ENCODE measurements at regions of chr2 and their contacts with region 1.

Region 1: DNA sequence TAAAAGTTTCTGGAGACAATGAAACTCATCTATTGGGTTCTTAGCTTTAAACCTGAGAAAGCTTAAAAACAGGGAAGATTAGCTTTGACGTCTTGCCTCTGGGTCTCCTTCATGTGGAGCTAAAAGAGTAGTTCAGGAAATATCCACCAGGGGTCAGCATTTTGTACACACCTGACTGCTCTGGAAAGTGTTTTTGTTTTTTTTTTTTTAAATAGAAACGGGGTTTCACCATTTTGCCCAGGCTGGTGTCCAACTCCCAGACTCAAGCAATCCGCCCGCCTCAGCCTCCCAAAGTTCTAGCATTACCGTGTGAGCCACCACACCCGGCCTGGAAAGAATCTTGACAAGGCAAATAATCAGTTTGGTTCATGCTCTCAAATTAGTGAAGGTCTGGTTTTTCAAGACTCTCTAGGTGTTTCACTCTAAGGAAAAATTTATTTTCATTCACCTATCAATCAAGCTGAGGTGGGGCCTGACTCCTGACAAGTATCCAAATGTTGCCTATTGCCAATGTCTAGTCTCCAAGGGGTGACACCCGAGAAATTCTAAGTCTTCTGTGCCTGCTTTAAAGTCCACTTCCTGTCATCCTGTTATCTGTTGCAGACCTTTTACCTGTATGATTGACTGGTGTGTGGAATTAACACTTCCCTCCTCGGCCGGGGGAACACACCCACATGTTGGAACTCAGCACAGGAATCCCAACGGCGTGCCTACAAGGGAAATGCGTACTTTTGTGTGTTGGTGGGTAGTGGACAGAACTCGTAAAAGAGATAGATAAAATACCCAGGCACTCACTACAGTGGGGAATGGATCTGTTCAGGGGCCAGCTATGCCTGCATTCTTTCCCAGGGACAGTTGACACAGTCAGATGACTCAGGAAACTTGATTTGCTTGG is 11.3 kb downstream of the IL1RN start:
- DNase-seq: peak in 1 of 2 donors; percentile 92
- ATAC-seq: peak; percentile 83 to 92 (median 90)
- H3K4me3 ChIP-seq: no peak overlapping the region
- H3K4me3 Mint-ChIP-seq: peak overlapping the region; percentile 40
- H3K27ac ChIP-seq: no peak overlapping the region
- H3K27ac Mint-ChIP-seq: peak overlapping the region in 1 of 2 donors; percentile 33
- H3K4me1 ChIP-seq: peaks cover 6% of the 10 kb centered on the region
- H3K4me1 Mint-ChIP-seq: peaks cover 11 to 12% of the 10 kb centered on the region in 2 donors
- H3K27me3 ChIP-seq: no peaks in the 10 kb centered on the region
- H3K27me3 Mint-ChIP-seq: peaks cover 0 to 2% of the 10 kb centered on the region in 2 donors
- CTCF ChIP-seq: peak; percentile 84

Region 2: GRCh38 chr2:113173542-113174395 is 35.1 kb after region 1 on chr2 and contains the start of gene PSD4:
- intact Hi-C with region 1: loop called (anchors 1 kb)
- DNase-seq: peak; percentile 68 to 94
- ATAC-seq: peak; percentile 56 to 86 (median 75)
- H3K4me3 ChIP-seq: peak within 1 kb of the TSS; percentile 65
- H3K4me3 Mint-ChIP-seq: peak within 1 kb of the TSS; percentile 85
- H3K27ac ChIP-seq: peak within 1 kb of the TSS; percentile 81
- H3K27ac Mint-ChIP-seq: peak within 1 kb of the TSS; percentile 85 to 91
- H3K4me1 ChIP-seq: peaks cover 88% of the 10 kb centered on the region
- H3K4me1 Mint-ChIP-seq: peaks cover 71 to 79% of the 10 kb centered on the region in 2 donors
- H3K27me3 ChIP-seq: no peaks in the 10 kb centered on the region
- H3K27me3 Mint-ChIP-seq: no peaks in the 10 kb centered on the region
- CTCF ChIP-seq: no peak
- total RNA-seq, gene PSD4: 280 to 347 (median 340) TPM

Region 3: DNA sequence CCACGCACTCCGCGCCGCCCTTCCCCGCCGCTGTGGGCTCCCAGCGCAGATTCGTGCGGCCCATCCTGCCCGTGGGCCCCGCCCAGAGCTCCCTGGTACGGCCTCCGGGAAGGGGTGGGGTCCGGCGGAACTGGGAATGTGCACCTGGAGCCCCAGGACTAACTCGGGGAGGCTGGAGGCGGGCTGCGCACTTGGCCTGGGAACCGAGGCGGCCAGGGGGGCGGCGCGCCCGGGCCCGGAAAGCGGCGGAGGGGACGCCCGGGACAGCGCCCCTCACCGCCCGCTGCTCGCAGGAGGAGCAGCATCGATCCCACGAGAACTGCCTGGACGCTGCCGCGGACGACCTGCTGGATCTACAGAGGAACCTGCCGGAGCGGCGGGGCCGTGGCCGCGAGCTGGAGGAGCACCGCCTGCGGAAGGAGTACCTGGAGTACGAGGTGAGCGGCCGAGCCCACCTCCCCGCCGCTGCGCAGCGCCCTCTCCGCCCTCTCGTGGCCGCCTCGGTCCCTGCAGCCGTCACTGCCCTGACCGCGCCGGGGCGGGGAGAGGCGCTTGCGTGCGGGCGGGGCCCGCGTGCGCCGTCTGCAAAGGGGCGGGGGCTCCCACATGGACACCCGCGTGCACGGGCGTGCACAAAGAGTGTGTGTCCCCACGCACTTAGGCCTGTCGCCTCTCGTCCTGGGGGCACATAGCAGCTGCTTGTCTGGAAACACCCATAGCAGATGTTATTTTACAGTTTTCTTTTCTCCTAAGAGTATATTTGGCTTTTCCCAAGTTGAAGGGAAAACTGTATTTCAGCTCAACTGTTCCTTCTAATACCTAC is 60.3 kb after region 1 on chr2:
- intact Hi-C with region 1: loop called (anchors 2 kb)
- DNase-seq: peak; percentile 61 to 83
- ATAC-seq: peak; percentile 82 to 91 (median 86)
- H3K4me3 ChIP-seq: no peak overlapping the region
- H3K4me3 Mint-ChIP-seq: no peak overlapping the region
- H3K27ac ChIP-seq: no peak overlapping the region
- H3K27ac Mint-ChIP-seq: peak overlapping the region; percentile 70 to 80
- H3K4me1 ChIP-seq: peaks cover 15% of the 10 kb centered on the region
- H3K4me1 Mint-ChIP-seq: peaks cover 9 to 20% of the 10 kb centered on the region in 2 donors
- H3K27me3 ChIP-seq: no peaks in the 10 kb centered on the region
- H3K27me3 Mint-ChIP-seq: no peaks in the 10 kb centered on the region
- CTCF ChIP-seq: peak; percentile 82

Region 4: GRCh38 chr2:113370478-113371091 is 231.9 kb after region 1 on chr2:
- intact Hi-C with region 1: loop called (anchors 1 kb)
- DNase-seq: peak; percentile 28 to 85
- ATAC-seq: peak; percentile 82 to 93 (median 90)
- H3K4me3 ChIP-seq: no peak overlapping the region
- H3K4me3 Mint-ChIP-seq: no peak overlapping the region
- H3K27ac ChIP-seq: no peak overlapping the region
- H3K27ac Mint-ChIP-seq: no peak overlapping the region
- H3K4me1 ChIP-seq: peaks cover 3% of the 10 kb centered on the region
- H3K4me1 Mint-ChIP-seq: peaks cover 6 to 7% of the 10 kb centered on the region in 2 donors
- H3K27me3 ChIP-seq: no peaks in the 10 kb centered on the region
- H3K27me3 Mint-ChIP-seq: peaks cover 2 to 8% of the 10 kb centered on the region in 2 donors
- CTCF ChIP-seq: peak; percentile 46

Region 5: GRCh38 chr2:113390124-113390849 is 251.6 kb after region 1 on chr2:
- intact Hi-C with region 1: loop called (anchors 5 kb)
- DNase-seq: peak in 1 of 2 donors; percentile 88
- ATAC-seq: peak; percentile 98 to 99 (median 99)
- H3K4me3 ChIP-seq: peak overlapping the region; percentile 29
- H3K4me3 Mint-ChIP-seq: peak overlapping the region; percentile 88
- H3K27ac ChIP-seq: peak overlapping the region; percentile 5
- H3K27ac Mint-ChIP-seq: peak overlapping the region; percentile 73 to 79
- H3K4me1 ChIP-seq: peaks cover 3% of the 10 kb centered on the region
- H3K4me1 Mint-ChIP-seq: peaks cover 10 to 16% of the 10 kb centered on the region in 2 donors
- H3K27me3 ChIP-seq: no peaks in the 10 kb centered on the region
- H3K27me3 Mint-ChIP-seq: peaks cover 12 to 16% of the 10 kb centered on the region in 2 donors
- CTCF ChIP-seq: peak; percentile 95

Measured in natural killer cell (primary cell).